Activated naive CD8-positive, alpha-beta T cell treated with anti-CD3 and anti-CD28 coated beads, Interleukin-2, amount 10 ng/mL, durations not matched to agents 7 days and 5 days (primary cell): ENCODE measurements at regions of chr22 and their contacts with region 1.

Region 1: DNA sequence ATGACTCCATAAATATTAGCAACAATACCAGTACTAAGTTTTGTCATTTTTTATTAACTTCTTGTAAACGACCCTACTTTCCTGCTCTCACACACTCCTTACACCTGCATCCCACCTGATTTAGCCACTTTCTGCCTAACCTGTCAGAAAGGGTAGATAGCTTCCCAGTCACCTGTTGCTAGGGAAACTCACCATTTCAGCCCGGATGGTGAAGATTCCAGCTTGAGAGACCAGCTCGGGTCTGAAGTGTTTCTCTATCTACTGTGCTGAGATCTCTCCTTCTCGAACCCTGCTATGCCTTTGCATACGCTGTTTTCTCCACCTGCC is at the start of gene PARVG:
- DNase-seq: no peak
- ATAC-seq: peak; percentile 23
- H3K4me3 Mint-ChIP-seq: peak within 1 kb of the TSS; percentile 97
- H3K27ac Mint-ChIP-seq: peak within 1 kb of the TSS; percentile 96
- H3K4me1 Mint-ChIP-seq: peaks cover 21% of the 10 kb centered on the region
- H3K27me3 Mint-ChIP-seq: peaks cover 8% of the 10 kb centered on the region
- total RNA-seq, gene PARVG: 238 to 241 TPM

Region 2: DNA sequence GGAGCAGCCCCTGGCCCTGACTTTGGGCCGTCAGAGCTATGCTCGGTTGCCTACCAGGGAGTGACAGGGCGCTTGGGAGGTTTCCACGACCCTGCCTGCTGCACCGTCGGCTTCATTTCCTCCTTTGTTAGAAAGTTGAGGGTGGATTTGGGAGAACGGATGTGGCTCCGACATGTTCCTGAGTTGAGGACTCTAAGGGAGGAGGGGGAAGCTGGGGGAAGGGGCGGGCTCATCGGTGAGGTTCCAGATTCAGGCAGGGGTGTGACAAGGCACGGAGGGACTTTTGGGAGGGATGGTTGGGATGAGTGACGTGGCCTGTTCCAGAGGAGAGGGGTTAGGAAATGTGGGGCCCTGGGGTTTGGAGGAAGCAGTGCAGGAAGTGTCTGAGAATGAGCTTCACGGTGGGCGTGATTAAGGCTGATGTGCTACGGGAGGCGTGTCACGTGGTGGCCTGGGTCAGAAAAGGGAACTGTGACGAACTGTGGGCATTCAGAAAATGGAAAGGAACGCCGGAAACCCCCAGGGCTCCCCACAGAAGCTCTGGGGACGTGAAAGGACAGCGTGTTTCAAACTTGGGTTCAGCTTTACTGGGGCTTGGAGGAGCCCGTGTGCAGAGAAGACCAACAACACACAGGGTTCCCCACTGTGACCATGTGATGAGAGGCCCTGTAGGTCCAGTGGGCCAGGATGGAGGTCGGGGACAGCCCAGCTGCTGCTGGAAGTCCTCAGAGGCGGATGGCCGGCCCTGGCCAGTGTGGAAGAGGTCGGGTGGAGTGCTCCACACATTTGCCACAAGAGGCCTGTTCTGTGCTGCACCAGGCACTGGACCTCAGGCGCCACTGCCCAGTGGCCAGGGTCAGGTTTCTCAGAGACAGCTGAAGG is 153.8 kb before region 1 on chr22:
- POLR2A ChIA-PET with region 1: interaction called, 14 read pairs
- DNase-seq: peak; percentile 67
- ATAC-seq: peak; percentile 70
- H3K4me3 Mint-ChIP-seq: peak overlapping the region; percentile 78
- H3K27ac Mint-ChIP-seq: peak overlapping the region; percentile 94
- H3K4me1 Mint-ChIP-seq: peaks cover 41% of the 10 kb centered on the region
- H3K27me3 Mint-ChIP-seq: no peaks in the 10 kb centered on the region

Region 3: DNA sequence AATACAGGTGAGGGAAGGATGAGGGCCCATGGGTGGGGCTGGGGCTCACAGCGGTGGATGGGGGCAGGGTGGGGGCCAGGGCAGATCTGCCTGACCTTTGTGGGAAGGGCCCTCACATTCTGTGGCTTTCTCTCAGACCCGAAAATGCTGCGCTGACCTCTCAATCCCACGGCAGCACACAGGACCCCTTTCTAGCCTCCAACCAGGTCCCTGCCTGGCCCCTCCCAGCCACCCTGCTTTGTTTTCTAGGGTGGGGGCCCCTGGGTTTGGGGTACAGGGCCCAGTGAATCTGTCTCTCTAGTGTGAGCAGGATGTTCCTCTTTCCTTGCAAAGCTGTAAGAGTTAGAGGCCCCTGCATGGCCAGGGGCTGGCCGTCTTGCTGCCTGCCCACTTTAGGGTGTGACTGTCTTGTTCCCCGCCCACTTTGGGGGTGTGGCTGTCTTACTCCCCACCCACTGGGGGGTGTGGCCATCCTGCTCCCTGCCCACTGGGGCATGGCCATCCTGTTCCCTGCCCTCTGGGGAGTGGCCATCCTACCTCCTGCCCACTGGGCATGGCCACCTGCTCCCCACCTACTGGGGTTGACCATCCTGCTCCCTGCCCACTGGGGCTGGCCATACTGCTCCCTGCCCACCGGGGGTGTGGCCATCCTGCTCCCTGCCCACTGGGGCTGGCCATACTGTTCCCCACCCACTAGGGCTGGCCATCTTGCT is 11.6 kb after region 1 on chr22:
- POLR2A ChIA-PET with region 1: interaction called, 13 read pairs
- DNase-seq: peak; percentile 70
- ATAC-seq: peak; percentile 40
- H3K4me3 Mint-ChIP-seq: no peak overlapping the region
- H3K27ac Mint-ChIP-seq: no peak overlapping the region
- H3K4me1 Mint-ChIP-seq: peaks cover 23% of the 10 kb centered on the region
- H3K27me3 Mint-ChIP-seq: no peaks in the 10 kb centered on the region